A673 (cell line): ENCODE measurements at regions of chr11 and their contacts with region 1.

Region 1: DNA sequence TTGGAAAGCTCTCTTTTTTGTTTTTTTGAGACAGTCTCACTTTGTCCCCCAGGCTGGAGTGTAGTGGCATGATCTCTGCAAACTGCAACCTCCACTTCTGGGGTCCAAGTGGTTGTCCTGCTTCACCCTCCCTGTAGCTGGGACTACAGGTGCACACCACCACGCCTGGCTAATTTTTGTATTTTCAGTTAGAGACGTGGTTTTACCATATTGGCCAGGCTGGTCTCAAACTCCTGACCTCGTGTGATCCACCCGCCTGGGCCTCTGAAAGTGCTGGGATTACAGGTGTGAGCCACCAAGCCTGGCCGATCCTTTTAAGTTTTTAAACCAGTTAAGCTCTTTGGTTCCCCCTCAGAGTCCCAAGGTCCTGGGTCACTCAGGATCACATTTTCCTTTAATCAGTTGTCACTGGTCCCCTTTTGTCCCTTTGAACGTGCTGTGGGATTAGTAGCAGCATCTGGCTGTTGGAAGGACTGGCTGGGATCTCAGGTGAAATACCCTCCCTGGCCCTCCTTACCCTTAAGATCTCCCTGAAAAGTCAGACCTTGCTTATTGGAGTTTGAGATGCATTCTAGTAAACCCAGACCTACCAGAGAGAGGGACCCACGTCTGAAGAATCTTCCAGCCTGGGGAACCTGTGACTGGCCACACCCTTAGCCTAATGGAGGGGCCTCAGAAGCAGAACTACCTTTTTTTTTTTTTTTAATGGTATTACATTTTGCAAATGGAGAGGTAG is 8.1 kb downstream of the MALAT1 start:
- DNase-seq: peak; percentile 70
- H3K4me3 ChIP-seq: peak overlapping the region; percentile 85
- H3K27ac ChIP-seq: peak overlapping the region; percentile 72
- H3K4me1 ChIP-seq: peaks cover 33% of the 10 kb centered on the region
- H3K27me3 ChIP-seq: no peaks in the 10 kb centered on the region
- CTCF ChIP-seq: no peak

Region 2: DNA sequence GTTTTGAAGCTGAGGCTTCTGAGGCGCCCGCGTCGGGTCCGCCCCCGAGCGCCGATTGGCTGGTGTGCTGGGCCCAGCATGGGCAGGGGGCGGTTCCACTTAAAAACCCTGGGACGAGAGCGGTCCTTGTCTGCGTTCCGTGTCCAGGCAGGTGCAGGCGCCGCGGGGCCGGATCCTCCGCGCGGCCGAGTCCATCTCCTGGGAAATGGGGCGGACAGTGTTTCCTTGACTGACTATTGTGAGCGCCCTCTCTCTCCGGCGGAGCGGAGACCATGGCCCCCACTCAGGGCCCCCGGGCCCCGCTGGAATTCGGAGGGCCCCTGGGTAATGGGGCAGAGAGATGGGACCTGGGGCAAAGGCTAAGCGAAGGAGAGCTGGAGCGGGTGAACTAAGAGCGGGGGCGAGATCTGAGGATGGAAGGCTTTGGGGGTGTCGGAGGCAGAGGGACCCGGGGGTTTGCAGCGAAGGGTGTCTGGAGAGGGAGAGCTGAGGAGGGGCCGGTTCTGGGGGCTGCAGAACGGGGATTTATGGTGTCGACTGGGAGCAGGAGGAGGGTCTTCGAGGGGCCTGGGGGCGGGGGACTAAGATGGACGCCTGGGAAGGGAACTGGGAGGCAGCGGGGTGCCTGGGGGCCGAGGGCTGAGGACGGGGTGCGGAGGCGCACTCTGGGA is 395.1 kb before region 1 on chr11 and contains the start of gene TM7SF2:
- CTCF ChIA-PET with region 1: interaction called, 15 read pairs
- POLR2A ChIA-PET with region 1: no interaction called
- intact Hi-C with region 1: loop called (anchors 2 kb)
- DNase-seq: peak; percentile 99
- H3K4me3 ChIP-seq: peak within 1 kb of the TSS; percentile 80
- H3K27ac ChIP-seq: peak within 1 kb of the TSS; percentile 75
- H3K4me1 ChIP-seq: peaks cover 27% of the 10 kb centered on the region
- H3K27me3 ChIP-seq: no peaks in the 10 kb centered on the region
- CTCF ChIP-seq: no peak
- total RNA-seq, gene TM7SF2: 37.8 and 50.5 TPM in 2 replicates

Region 3: GRCh38 chr11:65159012-65159411 is 347.9 kb before region 1 on chr11:
- CTCF ChIA-PET with region 1: no interaction called
- POLR2A ChIA-PET with region 1: no interaction called
- intact Hi-C with region 1: no loop called
- DNase-seq: no peak
- H3K4me3 ChIP-seq: no peak overlapping the region
- H3K27ac ChIP-seq: no peak overlapping the region
- H3K4me1 ChIP-seq: no peaks in the 10 kb centered on the region
- H3K27me3 ChIP-seq: no peaks in the 10 kb centered on the region
- CTCF ChIP-seq: no peak

Region 4: GRCh38 chr11:65329944-65330403 is 177.0 kb before region 1 on chr11:
- CTCF ChIA-PET with region 1: interaction called, 3 read pairs
- POLR2A ChIA-PET with region 1: interaction called, 11 read pairs
- intact Hi-C with region 1: no loop called
- DNase-seq: peak; percentile 95
- H3K4me3 ChIP-seq: no peak overlapping the region
- H3K27ac ChIP-seq: peak overlapping the region; percentile 24
- H3K4me1 ChIP-seq: peaks cover 6% of the 10 kb centered on the region
- H3K27me3 ChIP-seq: no peaks in the 10 kb centered on the region
- CTCF ChIP-seq: peak; percentile 88

Region 5: DNA sequence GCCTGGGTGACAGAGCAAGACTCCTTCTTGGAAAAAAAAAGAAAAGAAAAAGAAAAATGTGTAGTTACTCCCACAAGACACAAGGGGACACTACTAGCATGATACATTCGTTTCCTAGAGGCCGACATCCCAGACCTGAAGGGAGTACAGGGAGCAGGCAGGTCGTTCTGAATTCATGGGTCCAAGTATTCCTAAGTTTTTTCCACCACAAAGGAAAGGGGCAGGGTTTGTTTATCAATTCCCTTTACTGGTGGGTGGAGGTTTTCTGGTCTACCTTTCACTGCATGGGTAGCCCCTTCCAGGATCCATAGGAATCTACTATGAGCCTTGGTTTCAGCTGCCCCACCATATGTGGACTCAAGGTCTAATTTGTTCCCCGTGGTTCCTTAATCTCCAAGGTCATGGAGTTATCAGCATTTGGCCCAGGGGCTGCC is 140.6 kb before region 1 on chr11:
- CTCF ChIA-PET with region 1: interaction called, 6 read pairs
- POLR2A ChIA-PET with region 1: no interaction called
- intact Hi-C with region 1: loop called (anchors 1 kb)
- DNase-seq: peak; percentile 92
- H3K4me3 ChIP-seq: no peak overlapping the region
- H3K27ac ChIP-seq: no peak overlapping the region
- H3K4me1 ChIP-seq: no peaks in the 10 kb centered on the region
- H3K27me3 ChIP-seq: no peaks in the 10 kb centered on the region
- CTCF ChIP-seq: peak; percentile 72

Region 6: GRCh38 chr11:65477149-65477965 is 29.6 kb before region 1 on chr11:
- CTCF ChIA-PET with region 1: interaction called, 24 read pairs
- POLR2A ChIA-PET with region 1: interaction called, 5 read pairs
- intact Hi-C with region 1: no loop called
- DNase-seq: peak; percentile 97
- H3K4me3 ChIP-seq: peak overlapping the region; percentile 68
- H3K27ac ChIP-seq: peak overlapping the region; percentile 96
- H3K4me1 ChIP-seq: peaks cover 21% of the 10 kb centered on the region
- H3K27me3 ChIP-seq: no peaks in the 10 kb centered on the region
- CTCF ChIP-seq: no peak

Region 7: DNA sequence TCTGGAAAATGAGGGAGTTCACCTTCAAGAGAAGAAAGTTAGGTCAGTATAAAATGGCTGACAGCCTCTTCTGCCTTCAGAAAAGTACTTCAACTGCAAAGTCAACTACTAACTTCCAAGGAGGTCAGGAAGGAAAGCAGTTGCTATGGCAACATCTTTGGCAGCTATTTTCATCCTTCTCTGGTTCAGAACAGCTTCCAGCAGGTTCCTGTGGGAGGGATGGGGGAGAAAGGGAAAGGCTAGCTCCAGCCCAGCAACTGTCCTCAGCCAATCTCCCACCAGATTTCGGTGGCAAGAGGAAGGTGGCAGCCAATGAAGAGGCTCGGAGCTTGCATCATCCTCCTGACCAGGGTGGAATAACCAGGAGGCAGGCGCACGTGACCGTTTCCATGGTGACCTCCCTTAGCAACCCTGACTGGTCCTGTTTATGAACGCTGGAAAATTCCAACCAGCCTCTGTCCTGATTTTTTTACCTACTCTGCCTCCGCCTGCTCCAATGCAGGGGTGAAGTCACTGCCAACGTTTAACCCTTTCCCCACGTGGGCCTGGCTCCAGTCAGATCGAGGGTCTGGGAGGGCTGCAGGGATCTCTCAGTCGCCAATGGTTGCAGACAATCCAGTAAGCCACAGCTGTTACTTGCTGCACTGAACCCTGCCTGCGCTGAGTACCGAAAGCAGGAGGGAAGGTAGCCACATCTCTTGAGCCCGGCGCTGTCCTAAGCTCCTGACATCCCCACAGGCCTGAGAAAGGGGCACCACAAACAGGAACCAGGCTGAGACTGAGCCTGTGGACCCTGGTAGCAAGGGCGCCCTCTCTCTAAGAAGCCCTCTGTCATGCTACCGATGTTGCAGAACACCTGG is 19.3 kb before region 1 on chr11:
- CTCF ChIA-PET with region 1: interaction called, 5 read pairs
- POLR2A ChIA-PET with region 1: interaction called, 17 read pairs
- intact Hi-C with region 1: no loop called
- DNase-seq: peak; percentile 100
- H3K4me3 ChIP-seq: no peak overlapping the region
- H3K27ac ChIP-seq: peak overlapping the region; percentile 90
- H3K4me1 ChIP-seq: peaks cover 65% of the 10 kb centered on the region
- H3K27me3 ChIP-seq: no peaks in the 10 kb centered on the region
- CTCF ChIP-seq: no peak

Region 8: GRCh38 chr11:65569973-65570918 is 63.3 kb after region 1 on chr11 and contains the start of gene ZNRD2:
- CTCF ChIA-PET with region 1: no interaction called
- POLR2A ChIA-PET with region 1: no interaction called
- intact Hi-C with region 1: no loop called
- DNase-seq: peak; percentile 100
- H3K4me3 ChIP-seq: peak within 1 kb of the TSS; percentile 87
- H3K27ac ChIP-seq: peak within 1 kb of the TSS; percentile 92
- H3K4me1 ChIP-seq: peaks cover 28% of the 10 kb centered on the region
- H3K27me3 ChIP-seq: no peaks in the 10 kb centered on the region
- CTCF ChIP-seq: peak; percentile 64
- total RNA-seq, gene ZNRD2: 95.4 and 98.9 TPM in 2 replicates

Region 9: GRCh38 chr11:65779851-65780577 is 273.1 kb after region 1 on chr11:
- CTCF ChIA-PET with region 1: no interaction called
- POLR2A ChIA-PET with region 1: no interaction called
- intact Hi-C with region 1: no loop called
- DNase-seq: peak; percentile 93
- H3K4me3 ChIP-seq: peak overlapping the region; percentile 98
- H3K27ac ChIP-seq: peak overlapping the region; percentile 92
- H3K4me1 ChIP-seq: peaks cover 8% of the 10 kb centered on the region
- H3K27me3 ChIP-seq: peaks cover 6% of the 10 kb centered on the region
- CTCF ChIP-seq: peak; percentile 95

Region 10: DNA sequence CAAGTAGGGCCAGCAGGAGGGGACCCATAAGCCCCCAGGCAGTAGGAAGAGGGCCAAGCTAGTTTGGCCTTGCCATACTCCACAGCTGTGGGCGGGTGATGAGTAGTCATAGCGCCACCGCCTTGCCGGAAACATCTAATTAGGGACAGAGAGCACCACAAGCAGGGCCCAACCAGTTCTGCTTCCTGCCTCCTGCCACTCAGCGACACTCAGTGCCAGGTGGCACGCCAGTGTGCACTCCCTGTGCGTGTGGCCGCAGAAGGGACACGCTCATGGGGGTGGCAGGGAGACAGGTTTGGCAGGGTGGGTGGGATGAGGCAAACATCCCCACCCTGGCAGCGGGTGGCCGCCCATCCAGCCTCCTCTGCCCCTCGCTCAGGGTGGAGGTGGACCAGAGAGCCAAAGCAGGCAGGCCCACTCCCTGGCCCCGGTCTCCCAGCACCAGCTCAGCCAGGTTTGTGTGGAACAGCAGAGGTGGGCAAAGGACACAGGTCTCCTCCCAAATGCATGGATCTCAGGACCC is 284.8 kb after region 1 on chr11:
- CTCF ChIA-PET with region 1: no interaction called
- POLR2A ChIA-PET with region 1: no interaction called
- intact Hi-C with region 1: no loop called
- DNase-seq: no peak
- H3K4me3 ChIP-seq: no peak overlapping the region
- H3K27ac ChIP-seq: no peak overlapping the region
- H3K4me1 ChIP-seq: peaks cover 8% of the 10 kb centered on the region
- H3K27me3 ChIP-seq: peaks cover 38% of the 10 kb centered on the region
- CTCF ChIP-seq: no peak